SK-N-SH (cell line): ENCODE measurements at regions of chr17 and their contacts with region 1.

Region 1: GRCh38 chr17:1573916-1574696 is 11.5 kb upstream of the PITPNA start:
- DNase-seq: peak; percentile 98
- H3K4me3 ChIP-seq: no peak overlapping the region; a peak in 1 of 4 replicates
- H3K27ac ChIP-seq: no peak overlapping the region
- H3K4me1 ChIP-seq: peaks cover 9 to 10% of the 10 kb centered on the region in 2 experiments; a peak in 1 of 4 replicates
- H3K27me3 ChIP-seq: no peaks in the 10 kb centered on the region
- CTCF ChIP-seq: peak; percentile 94
- EP300 ChIP-seq: no peak
- RAD21 ChIP-seq: peak; percentile 78

Region 2: DNA sequence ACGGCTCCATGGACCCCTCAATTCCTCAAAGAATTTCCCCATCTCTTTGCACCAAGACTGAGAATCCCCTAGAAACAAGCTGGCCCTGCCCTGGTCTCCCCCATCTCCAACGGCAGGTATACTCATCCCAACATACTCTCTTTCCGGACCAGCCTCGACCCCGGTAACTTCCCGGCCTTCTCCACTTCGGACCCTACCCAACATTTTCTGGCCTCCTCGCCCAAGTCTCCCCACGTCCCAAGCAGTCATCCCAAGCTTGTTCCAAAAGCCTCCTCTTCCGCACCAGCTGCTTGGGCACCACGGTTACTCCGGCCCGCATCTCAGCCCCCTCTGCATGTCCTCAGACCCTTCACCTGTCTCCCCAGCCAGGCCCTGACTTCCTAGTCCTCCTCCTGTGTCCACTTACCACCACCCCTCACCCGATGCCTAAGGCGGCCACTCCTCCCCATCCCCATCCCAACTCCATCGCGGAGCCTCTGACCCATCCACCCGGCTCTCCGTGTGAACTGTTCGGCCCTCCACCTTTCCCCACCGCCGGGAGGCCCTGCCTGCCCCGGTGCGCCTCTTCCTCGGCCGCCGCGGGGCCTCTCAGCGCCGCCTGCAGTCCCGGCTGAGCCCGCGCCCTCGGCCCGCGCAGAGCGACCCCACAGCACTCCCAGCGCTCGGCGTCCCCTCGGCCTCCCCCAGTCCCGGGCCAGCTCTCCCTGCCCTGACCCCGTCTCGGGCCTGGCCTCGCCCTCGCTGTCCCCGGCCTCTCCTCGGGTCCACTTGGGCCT is 12.5 kb before region 1 on chr17:
- CTCF ChIA-PET with region 1: interaction called, 21 read pairs
- POLR2A ChIA-PET with region 1: no interaction called
- DNase-seq: peak; percentile 79
- H3K4me3 ChIP-seq: peak overlapping the region; percentile 67 to 79
- H3K27ac ChIP-seq: peak overlapping the region in 1 of 2 experiments; percentile 57; a peak in 2 of 4 replicates
- H3K4me1 ChIP-seq: peaks cover 0 to 22% of the 10 kb centered on the region in 2 experiments; a peak in 1 of 4 replicates
- H3K27me3 ChIP-seq: no peaks in the 10 kb centered on the region
- CTCF ChIP-seq: peak; percentile 24
- EP300 ChIP-seq: no peak
- RAD21 ChIP-seq: no peak

Region 3: GRCh38 chr17:1621273-1622228 is 47.4 kb after region 1 on chr17:
- CTCF ChIA-PET with region 1: interaction called, 14 read pairs
- POLR2A ChIA-PET with region 1: no interaction called
- DNase-seq: no peak
- H3K4me3 ChIP-seq: no peak overlapping the region
- H3K27ac ChIP-seq: no peak overlapping the region
- H3K4me1 ChIP-seq: no peaks in the 10 kb centered on the region
- H3K27me3 ChIP-seq: no peaks in the 10 kb centered on the region
- CTCF ChIP-seq: no peak
- EP300 ChIP-seq: no peak
- RAD21 ChIP-seq: no peak

Region 4: DNA sequence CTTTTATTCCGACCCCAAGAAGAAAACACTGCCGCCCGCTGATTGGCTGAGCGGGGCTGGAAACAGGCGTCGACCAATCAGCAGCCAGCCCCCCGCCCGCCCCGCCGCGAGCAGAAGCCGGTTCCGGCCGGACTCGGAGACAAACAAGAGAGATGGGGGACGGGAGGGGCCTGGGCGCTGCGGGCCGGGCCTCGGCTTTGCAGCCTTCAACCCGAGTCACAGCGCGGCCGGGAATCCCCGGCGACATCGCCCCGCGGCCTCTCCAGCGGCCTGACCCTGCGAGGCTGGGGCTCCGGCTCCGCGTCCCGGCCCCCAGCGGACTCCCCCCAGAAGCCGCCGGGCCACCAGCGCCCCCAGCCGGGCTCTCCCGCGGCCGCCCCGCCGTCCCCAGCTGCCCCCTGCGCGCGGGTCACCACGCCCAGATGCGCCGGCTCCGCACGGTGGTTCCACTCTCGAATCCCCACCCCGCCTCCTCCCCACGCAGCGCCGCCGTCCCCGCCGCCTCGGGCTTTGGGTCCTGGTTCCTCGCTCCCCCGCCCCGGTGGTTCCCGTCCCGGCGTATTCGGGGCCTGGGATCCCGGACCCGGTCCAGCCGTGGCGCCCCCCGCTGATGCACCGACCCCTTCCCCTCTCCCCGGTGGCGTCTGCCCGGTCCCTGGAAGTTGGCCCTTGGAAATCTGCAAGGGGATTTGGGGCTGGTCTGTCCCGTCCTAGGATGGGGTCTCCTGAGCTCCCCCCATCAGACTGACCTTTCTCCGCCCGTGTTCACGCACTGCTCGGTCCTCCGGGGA is 54.9 kb after region 1 on chr17:
- CTCF ChIA-PET with region 1: interaction called, 42 read pairs
- POLR2A ChIA-PET with region 1: interaction called, 6 read pairs
- DNase-seq: peak; percentile 99
- H3K4me3 ChIP-seq: peak overlapping the region; percentile 84 to 96
- H3K27ac ChIP-seq: peak overlapping the region; percentile 80 to 95
- H3K4me1 ChIP-seq: peaks cover 3 to 13% of the 10 kb centered on the region in 2 experiments; a peak in 2 of 4 replicates
- H3K27me3 ChIP-seq: no peaks in the 10 kb centered on the region
- CTCF ChIP-seq: peak; percentile 54
- EP300 ChIP-seq: peak in 1 of 2 experiments; percentile 50; a peak in 2 of 4 replicates
- RAD21 ChIP-seq: peak; percentile 22; the same call in 1 of the 2 replicates

Region 5: DNA sequence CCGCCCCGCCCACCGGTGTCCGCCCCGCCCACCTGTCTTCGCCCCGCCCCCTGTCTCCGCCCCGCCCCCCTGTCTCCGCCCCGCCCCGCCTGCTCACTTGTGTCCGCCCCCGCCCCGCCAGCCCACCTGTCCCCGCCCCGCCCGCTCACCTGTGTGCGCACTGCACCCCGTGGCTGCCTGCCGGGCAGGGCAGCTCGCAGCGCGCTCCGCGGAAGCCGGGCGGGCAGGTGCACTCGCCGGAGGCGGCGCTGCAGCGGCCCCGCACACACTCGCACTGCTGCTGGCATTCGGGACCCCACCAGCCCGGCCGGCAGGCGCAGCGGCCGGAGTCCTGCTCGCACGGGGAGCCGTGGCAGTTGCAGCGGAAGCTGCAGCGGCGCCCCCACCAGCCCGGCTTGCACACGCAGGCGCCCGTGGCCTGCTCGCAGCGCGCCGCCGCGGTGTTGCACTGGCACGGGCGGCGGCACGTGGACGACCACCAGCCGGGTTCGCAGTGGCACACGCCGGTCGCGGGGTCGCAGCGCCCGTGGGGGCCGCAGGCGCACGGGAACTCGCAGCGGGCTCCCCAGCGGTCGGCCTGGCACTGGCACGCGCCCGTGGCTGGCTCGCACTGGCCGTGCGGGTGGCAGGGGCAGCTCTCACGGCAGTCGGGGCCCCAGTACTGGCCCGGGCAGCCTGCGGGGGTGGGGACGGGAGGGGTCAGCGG is 69.3 kb after region 1 on chr17:
- CTCF ChIA-PET with region 1: interaction called, 65 read pairs
- POLR2A ChIA-PET with region 1: interaction called, 5 read pairs
- DNase-seq: peak; percentile 89
- H3K4me3 ChIP-seq: peak overlapping the region in 1 of 2 experiments; percentile 46; a peak in 2 of 4 replicates
- H3K27ac ChIP-seq: no peak overlapping the region
- H3K4me1 ChIP-seq: peaks cover 13 to 28% of the 10 kb centered on the region in 2 experiments; a peak in 2 of 4 replicates
- H3K27me3 ChIP-seq: no peaks in the 10 kb centered on the region
- CTCF ChIP-seq: peak; percentile 19; the same call in 1 of the 2 replicates
- EP300 ChIP-seq: no peak
- RAD21 ChIP-seq: no peak

Region 6: DNA sequence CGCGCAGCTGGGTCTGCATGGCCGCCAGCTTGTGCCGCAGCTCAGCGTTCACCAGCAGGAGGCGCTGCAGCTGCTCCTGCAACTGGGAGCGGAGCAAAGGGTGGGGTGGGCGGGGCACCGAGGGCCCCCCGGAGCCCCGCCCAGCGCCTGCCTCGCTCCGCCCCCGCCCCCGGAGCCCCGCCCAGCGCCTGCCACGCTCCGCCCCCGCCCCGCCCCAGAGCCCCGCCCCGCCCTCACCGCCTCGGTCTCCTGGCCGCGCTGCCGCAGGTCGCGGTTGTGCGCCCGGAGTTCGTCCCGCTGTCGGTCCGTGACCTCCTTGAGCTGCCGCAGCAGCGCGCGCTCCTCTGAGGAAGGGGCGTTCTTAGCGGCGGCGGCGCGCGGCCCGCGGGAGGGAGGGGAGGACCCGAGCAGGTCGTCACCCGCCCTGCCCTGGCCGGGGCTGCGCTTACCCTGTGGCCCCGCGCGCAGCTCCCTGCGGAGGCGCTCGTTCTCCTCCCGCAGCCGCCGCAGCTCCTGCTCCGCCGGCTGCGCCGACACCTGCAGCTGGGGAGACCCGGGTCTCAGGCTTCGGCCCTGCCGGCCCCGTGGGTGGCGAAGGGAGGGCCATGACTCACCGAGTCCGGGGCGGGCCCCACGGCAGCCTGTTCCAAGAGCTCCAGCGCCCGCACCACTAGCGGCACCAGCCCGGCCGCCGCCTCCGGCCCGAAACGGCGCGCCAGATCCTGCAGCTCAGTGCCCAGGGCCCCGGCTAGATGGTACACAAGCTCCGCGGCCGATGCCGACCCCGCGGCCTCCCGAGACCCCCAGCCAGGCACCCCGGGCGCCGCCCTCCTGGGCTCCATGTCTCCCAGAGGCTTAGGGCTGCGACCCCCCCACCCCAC is 75.1 kb after region 1 on chr17:
- CTCF ChIA-PET with region 1: interaction called, 65 read pairs
- POLR2A ChIA-PET with region 1: interaction called, 5 read pairs
- DNase-seq: peak; percentile 100
- H3K4me3 ChIP-seq: peak overlapping the region; percentile 57 to 74
- H3K27ac ChIP-seq: peak overlapping the region; percentile 64 to 86
- H3K4me1 ChIP-seq: peaks cover 9 to 16% of the 10 kb centered on the region in 2 experiments; a peak in 2 of 4 replicates
- H3K27me3 ChIP-seq: no peaks in the 10 kb centered on the region
- CTCF ChIP-seq: no peak
- EP300 ChIP-seq: 0 out of 4 replicates have a peak, but pooled peaks of 1 of the 2 experiments have one; percentile 21
- RAD21 ChIP-seq: no peak; the same call in 1 of the 2 replicates